Left ventricle myocardium inferior (tissue), 1 donor: ENCODE measurements at regions of chr6 and their contacts with region 1.

Region 1: GRCh38 chr6:41591859-41592502 is 45.8 kb downstream of the FOXP4 start:
- DNase-seq: peak; percentile 64
- H3K4me3 ChIP-seq: no peak overlapping the region
- H3K27ac ChIP-seq: no peak overlapping the region
- H3K4me1 ChIP-seq: no peaks in the 10 kb centered on the region
- H3K27me3 ChIP-seq: no peaks in the 10 kb centered on the region
- CTCF ChIP-seq: peak; percentile 95

Region 2: DNA sequence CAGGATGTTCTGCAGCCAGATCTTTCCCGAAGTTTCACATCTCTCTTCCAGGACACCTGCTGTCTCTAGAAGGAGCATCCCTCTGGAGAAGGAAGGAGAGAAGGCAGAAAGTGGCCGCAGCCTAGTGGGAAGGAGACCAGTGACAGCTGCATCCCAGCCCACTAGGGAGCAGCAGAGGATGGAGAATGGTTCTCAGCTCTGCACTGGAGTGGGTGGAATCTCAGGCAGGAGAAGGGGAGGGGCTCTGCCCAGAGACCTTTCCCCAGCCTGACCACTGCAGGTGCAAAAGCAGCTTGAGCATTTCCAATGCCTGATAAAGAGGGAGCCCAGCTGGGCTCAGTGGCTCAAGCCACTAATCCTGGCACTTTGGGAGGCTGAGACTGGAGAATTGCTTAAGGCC is 224.3 kb before region 1 on chr6:
- intact Hi-C with region 1: loop called (anchors 5 kb)
- DNase-seq: peak; percentile 28
- H3K4me3 ChIP-seq: no peak overlapping the region
- H3K27ac ChIP-seq: no peak overlapping the region
- H3K4me1 ChIP-seq: peaks cover 20% of the 10 kb centered on the region
- H3K27me3 ChIP-seq: peaks cover 97% of the 10 kb centered on the region
- CTCF ChIP-seq: peak; percentile 73

Region 3: DNA sequence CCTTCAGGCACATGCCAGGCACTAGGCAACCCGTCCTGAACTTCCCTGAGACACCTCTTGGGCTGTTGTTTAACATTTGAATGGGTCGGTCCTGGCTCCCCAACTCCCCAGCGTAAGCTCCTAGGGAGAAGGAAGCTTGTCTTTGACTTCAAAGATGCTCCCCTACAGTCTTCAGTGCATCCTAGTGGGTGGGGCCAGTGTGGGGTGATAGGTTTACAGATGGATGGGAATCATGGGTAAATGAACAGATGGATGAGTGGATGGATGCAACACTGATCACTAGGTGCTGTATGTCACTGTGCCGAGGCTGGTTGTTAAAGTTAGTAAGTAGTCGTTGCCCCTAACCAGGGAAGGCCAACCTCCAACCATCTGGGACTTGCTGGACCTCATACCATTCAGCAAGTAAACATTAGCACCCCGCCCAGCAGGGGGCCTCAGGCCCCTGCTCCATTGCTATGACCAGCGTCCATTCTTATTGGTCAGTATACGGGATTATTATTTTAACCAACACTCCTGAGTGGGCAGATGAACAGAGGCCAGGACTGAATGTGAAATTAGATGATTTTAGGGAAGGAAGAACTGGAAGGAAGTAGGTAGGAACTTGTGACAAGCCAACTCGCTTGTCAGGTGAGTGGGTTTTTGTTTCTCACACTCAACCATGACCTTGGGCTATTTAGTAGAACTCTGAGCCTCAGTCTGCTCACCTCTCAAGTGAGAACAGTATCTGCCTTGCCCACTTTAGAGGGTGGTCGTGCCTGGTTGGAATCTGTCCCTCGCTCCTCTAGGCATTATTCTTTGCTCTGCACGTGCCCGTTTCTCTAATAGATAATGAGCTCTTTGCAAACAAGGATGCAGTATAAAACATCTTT is 128.7 kb before region 1 on chr6:
- intact Hi-C with region 1: loop called (anchors 5 kb)
- DNase-seq: peak; percentile 73
- H3K4me3 ChIP-seq: no peak overlapping the region
- H3K27ac ChIP-seq: no peak overlapping the region
- H3K4me1 ChIP-seq: no peaks in the 10 kb centered on the region
- H3K27me3 ChIP-seq: peaks cover 54% of the 10 kb centered on the region
- CTCF ChIP-seq: peak; percentile 77

Region 4: DNA sequence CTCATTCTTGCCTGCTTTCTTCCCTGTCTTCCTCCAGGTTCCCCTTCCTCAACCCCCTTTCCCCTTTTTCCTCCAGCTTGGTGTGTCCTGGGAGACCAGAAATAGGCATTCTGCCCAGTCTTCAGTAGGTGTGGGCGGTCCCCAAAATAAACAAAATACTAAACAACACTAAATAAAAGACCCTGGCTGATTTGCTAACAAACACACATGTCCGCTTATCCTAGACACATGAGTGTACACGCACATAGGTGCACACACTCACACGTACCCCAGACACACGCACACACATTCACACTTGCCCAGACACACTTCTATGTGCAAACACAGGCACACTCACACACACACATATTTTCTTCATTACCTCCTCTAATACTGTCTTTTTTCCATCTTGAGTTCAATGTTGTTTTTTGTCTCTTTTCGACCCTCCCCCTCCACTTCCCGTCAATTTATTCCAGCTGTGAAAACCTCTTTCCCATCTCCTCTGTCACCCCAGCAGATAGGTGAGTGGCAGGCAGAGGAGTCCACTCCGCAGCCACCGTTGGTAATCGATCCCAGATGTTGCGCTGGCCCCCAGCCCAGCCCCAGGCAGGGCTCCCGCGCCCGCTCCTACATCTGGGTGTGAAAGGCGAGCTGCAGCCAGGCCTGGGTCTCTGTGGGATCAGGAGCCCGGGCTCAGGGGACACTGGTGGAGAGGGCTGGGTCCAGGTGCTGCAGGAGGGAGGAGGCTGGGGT is 102.7 kb before region 1 on chr6:
- intact Hi-C with region 1: no loop called
- DNase-seq: peak; percentile 32
- H3K4me3 ChIP-seq: no peak overlapping the region
- H3K27ac ChIP-seq: no peak overlapping the region
- H3K4me1 ChIP-seq: no peaks in the 10 kb centered on the region
- H3K27me3 ChIP-seq: peaks cover 61% of the 10 kb centered on the region
- CTCF ChIP-seq: no peak

Region 5: DNA sequence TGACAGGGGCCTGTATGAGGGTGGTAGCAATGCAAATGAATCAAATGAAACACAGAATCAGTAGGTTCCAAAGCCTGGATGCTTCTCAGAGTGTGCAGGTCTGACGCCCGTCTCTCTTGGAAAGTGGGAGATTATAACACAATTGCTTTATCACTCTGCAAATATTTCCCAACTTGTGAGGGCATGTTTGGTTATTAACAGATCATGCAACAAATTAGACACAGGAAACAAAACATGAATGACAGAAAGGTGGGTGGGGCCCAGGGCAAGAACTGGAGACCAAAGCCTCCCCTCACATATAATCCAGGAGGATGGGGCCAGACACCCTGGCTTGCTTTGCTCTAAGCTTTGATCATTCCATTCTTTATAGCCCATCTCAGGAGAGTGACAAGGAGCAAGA is 734.3 kb after region 1 on chr6:
- intact Hi-C with region 1: no loop called
- DNase-seq: no peak
- H3K4me3 ChIP-seq: no peak overlapping the region
- H3K27ac ChIP-seq: no peak overlapping the region
- H3K4me1 ChIP-seq: no peaks in the 10 kb centered on the region
- H3K27me3 ChIP-seq: no peaks in the 10 kb centered on the region
- CTCF ChIP-seq: no peak